Gastrocnemius medialis (tissue), 4 donors: ENCODE measurements at regions of chr2 and their contacts with region 1.

Region 1: GRCh38 chr2:8252997-8253694 is 428.7 kb upstream of the ID2 start:
- DNase-seq: peak; percentile 48 to 71
- ATAC-seq: peak; percentile 89
- H3K4me3 ChIP-seq: no peak overlapping the region
- H3K27ac ChIP-seq: peak overlapping the region in 1 of 4 donors; percentile 54
- H3K4me1 ChIP-seq: peaks cover 4 to 7% of the 10 kb centered on the region in 2 donors
- H3K27me3 ChIP-seq: no peaks in the 10 kb centered on the region
- CTCF ChIP-seq: no peak
- POLR2A ChIP-seq: no peak

Region 2: DNA sequence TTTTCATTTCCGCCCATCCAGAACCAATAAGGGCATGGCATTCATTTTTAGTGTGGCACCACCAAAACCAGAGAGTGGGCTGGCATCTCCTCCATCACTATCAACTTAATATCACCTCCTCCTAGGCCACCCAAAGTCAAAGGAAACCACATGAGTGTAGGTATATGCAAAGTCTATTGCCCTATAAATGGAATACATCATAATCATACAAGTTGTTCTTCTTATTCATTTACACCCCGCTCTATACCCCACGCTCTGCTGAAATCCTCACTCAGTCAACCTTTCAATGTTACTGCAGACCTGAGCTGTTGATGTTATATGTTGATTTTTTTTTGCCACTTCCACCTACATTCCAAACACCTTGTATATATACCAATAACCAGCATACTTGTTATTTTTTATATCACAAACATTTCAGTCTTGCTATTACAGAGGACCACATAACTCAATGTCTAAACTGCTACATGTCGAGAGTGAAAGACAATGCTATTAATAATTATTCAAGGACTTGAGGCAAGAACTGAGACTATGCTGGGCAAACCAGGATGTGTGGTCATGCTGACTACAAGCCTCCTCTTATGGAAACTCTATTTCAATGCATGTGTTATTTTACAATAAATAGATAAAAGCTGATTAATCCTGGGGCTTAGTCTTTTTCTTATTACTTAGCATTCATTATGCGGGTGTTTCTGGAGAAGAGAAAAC is 37.8 kb before region 1 on chr2:
- in situ Hi-C with region 1: no loop called
- intact Hi-C with region 1: loop called (anchors 2 kb)
- DNase-seq: no peak
- ATAC-seq: no peak
- H3K4me3 ChIP-seq: no peak overlapping the region
- H3K27ac ChIP-seq: no peak overlapping the region
- H3K4me1 ChIP-seq: peaks cover 3 to 7% of the 10 kb centered on the region in 2 donors
- H3K27me3 ChIP-seq: no peaks in the 10 kb centered on the region
- CTCF ChIP-seq: no peak
- POLR2A ChIP-seq: no peak

Region 3: DNA sequence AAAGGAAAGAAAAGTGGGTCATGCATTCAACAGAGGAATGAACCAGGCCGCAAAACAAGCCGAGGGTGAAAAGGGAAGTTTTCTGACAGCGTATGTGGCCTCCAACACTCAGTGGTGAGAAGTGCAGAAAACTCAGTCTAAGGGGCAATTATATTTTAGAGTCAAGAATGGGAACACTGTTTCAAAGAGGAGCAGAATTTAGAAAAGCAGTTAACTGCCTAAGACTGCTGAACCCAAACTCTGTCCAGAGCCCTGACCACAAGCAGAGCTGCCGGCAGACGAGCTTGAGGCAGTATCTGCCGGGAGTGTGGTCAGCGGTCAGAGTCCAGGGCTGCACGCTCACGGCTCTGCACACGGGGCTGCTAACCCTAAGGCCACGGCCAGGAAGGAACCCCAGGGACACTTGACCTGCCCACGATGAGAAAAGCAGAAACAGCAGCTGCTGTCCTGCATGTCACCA is 81.8 kb after region 1 on chr2:
- in situ Hi-C with region 1: no loop called
- intact Hi-C with region 1: no loop called
- DNase-seq: no peak
- ATAC-seq: no peak
- H3K4me3 ChIP-seq: no peak overlapping the region
- H3K27ac ChIP-seq: no peak overlapping the region
- H3K4me1 ChIP-seq: no peaks in the 10 kb centered on the region
- H3K27me3 ChIP-seq: no peaks in the 10 kb centered on the region
- CTCF ChIP-seq: no peak
- POLR2A ChIP-seq: no peak